PC-3 (cell line): ENCODE measurements at regions of chr3 and their contacts with region 1.

Region 1: DNA sequence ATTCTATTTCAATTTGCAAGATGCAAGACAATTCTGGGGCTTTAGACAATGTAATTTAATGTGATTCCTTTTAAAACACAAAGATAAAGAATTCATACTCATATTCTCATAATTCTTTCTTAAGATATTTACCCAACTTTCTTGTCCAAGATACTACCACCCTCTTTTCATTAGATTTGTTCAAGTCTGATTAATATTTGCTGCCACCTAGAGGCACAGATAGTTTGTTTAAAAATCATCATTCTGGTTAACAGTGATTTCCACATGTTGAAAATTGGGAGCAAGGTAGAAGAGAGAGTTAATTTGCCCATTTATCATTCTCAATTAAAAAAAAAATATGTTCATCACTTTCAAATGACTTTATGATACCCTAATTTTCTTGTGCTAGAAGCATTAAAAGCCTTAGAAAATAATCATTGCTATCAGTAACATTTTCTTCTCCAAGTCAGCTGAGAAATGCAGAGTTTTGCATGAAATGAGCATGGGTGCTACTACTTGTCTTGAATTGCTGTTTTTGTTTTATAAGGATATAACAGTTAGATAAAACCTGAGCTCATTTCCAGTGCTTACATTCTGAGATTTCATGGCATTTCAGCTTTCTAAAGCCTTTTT is 11.6 kb downstream of the TAMM41 start:
- DNase-seq: peak; percentile 66
- ATAC-seq: 0 out of 2 replicates have a peak, but pooled peaks have one; percentile 58
- H3K4me3 ChIP-seq: no peak overlapping the region
- H3K27ac ChIP-seq: no peak overlapping the region
- H3K4me1 ChIP-seq: no peaks in the 10 kb centered on the region
- H3K27me3 ChIP-seq: no peaks in the 10 kb centered on the region
- CTCF ChIP-seq: peak; percentile 80

Region 2: GRCh38 chr3:11626084-11626463 is 209.1 kb before region 1 on chr3:
- CTCF ChIA-PET with region 1: no interaction called
- POLR2A ChIA-PET with region 1: no interaction called
- intact Hi-C with region 1: no loop called
- DNase-seq: no peak
- ATAC-seq: no peak
- H3K4me3 ChIP-seq: no peak overlapping the region
- H3K27ac ChIP-seq: no peak overlapping the region
- H3K4me1 ChIP-seq: no peaks in the 10 kb centered on the region
- H3K27me3 ChIP-seq: no peaks in the 10 kb centered on the region
- CTCF ChIP-seq: no peak

Region 3: DNA sequence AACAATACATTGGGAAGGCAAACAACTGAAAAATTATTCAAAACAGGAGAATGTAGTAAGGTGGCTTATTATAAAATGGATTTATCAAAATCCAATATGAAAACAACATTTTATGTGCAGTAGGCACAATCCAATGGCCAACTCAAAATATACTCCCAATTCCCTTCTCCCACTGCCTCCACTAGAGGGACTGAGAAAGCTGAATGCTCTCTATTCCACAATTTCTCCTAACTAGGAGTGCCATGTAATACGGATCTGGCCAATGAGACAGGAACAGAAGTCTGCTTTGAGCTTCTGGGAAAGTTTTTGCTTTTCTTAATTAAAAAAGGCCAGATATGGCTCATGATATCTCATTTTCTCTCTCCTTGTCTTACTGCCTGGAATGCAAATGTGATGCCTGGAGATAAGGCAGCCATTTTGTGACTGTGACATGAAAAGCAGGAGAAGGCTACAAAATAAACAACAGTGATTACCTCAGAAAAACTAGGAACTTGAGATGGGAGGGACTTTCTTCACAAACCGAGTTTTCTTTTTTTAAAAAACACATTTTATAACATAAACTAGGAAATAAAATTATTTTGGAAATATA is 172.6 kb before region 1 on chr3:
- CTCF ChIA-PET with region 1: interaction called, 3 read pairs
- POLR2A ChIA-PET with region 1: no interaction called
- intact Hi-C with region 1: loop called (anchors 5 kb)
- DNase-seq: peak; percentile 71
- ATAC-seq: peak; percentile 85
- H3K4me3 ChIP-seq: no peak overlapping the region
- H3K27ac ChIP-seq: no peak overlapping the region
- H3K4me1 ChIP-seq: peaks cover 14% of the 10 kb centered on the region; the same call in 1 of the 2 replicates
- H3K27me3 ChIP-seq: no peaks in the 10 kb centered on the region
- CTCF ChIP-seq: peak; percentile 84

Region 4: DNA sequence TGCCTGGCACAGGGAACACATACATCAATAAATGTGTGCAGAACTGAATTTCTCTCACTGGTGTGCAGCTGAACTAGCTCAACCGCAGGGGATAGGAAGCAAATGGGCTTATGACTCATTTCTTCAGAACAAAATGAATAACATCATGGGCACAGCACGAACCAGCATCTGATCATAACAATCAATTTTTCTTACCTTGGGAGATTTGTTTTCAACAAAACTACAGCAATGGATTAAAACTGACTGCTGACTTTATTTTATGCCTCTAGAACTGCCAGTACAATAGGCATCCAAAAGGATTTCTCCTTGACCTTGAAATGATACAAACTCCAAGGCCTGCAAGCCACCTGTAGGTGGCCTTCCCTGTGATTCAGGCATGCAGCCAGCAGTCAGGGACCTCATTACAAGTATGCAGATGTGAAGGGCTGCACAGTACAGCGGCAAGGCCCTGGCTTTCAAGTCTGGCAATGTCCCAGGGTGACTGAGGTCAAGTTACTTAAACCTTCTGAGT is 14.5 kb before region 1 on chr3:
- CTCF ChIA-PET with region 1: no interaction called
- POLR2A ChIA-PET with region 1: no interaction called
- intact Hi-C with region 1: no loop called
- DNase-seq: no peak
- ATAC-seq: peak; percentile 52
- H3K4me3 ChIP-seq: no peak overlapping the region
- H3K27ac ChIP-seq: no peak overlapping the region
- H3K4me1 ChIP-seq: peaks cover 4% of the 10 kb centered on the region; the same call in 1 of the 2 replicates
- H3K27me3 ChIP-seq: no peaks in the 10 kb centered on the region
- CTCF ChIP-seq: peak; percentile 27; the same call in 1 of the 2 replicates